ENCODE measurements at regions of chr20 and their contacts with region 1.

Region 1: GRCh38 chr20:1122388-1123315 is 4.2 kb downstream of the PSMF1 start:
- DNase-seq: peak; percentile 19
- H3K4me3 ChIP-seq: peak overlapping the region; percentile 2
- CTCF ChIP-seq: no peak

Region 2: DNA sequence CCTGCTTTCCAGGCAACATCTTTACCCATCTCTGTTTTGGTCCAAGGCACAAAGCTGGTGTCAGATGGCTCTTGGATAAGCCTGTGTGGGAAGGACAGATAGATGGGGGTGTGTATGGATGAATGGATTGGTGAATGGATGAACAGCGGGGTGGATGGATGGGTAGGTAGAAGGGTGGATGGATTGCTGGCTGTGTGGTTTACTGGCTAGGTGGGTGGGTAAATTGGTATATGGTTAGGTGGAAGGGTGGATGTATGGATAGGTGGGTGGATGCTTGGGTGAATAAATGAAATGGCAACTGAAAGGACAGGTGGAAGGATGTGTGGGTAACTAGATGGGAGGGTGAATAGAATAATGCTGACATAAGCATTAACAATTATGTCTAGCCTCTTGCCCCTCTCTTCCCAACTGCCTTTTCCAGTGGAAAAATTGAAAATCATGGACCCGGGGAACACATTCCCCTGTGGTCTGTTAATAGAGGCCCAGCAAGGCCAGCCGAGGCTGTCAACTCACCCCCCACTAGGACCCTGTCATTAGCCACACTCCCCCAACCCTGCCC is 76.7 kb before region 1 on chr20:
- in situ Hi-C with region 1: loop called (anchors 5 kb)
- DNase-seq: no peak
- H3K4me3 ChIP-seq: no peak overlapping the region
- CTCF ChIP-seq: no peak